Natural killer cell (primary cell): ENCODE measurements at regions of chr5 and their contacts with region 1.

Region 1: GRCh38 chr5:87121304-87122150 is 146.2 kb upstream of the RASA1 start:
- DNase-seq: peak; percentile 19 to 74
- ATAC-seq: peak; percentile 86 to 94 (median 86)
- H3K4me3 ChIP-seq: no peak overlapping the region
- H3K4me3 Mint-ChIP-seq: peak overlapping the region; percentile 54
- H3K27ac ChIP-seq: peak overlapping the region; percentile 63
- H3K27ac Mint-ChIP-seq: peak overlapping the region; percentile 67 to 75
- H3K4me1 ChIP-seq: peaks cover 18% of the 10 kb centered on the region
- H3K4me1 Mint-ChIP-seq: peaks cover 42 to 44% of the 10 kb centered on the region in 2 donors
- H3K27me3 ChIP-seq: no peaks in the 10 kb centered on the region
- H3K27me3 Mint-ChIP-seq: no peaks in the 10 kb centered on the region
- CTCF ChIP-seq: no peak

Region 2: GRCh38 chr5:86617756-86618576 is 503.6 kb before region 1 on chr5 and contains the start of gene COX7C:
- intact Hi-C with region 1: loop called (anchors 5 kb)
- DNase-seq: peak; percentile 81 to 99
- ATAC-seq: peak; percentile 97 to 98 (median 98)
- H3K4me3 ChIP-seq: peak within 1 kb of the TSS; percentile 89
- H3K4me3 Mint-ChIP-seq: peak within 1 kb of the TSS; percentile 98
- H3K27ac ChIP-seq: peak within 1 kb of the TSS; percentile 88
- H3K27ac Mint-ChIP-seq: peak within 1 kb of the TSS; percentile 93 to 98
- H3K4me1 ChIP-seq: peaks cover 5% of the 10 kb centered on the region
- H3K4me1 Mint-ChIP-seq: peaks cover 23 to 30% of the 10 kb centered on the region in 2 donors
- H3K27me3 ChIP-seq: peaks cover 3% of the 10 kb centered on the region
- H3K27me3 Mint-ChIP-seq: peaks cover 0 to 9% of the 10 kb centered on the region in 2 donors
- CTCF ChIP-seq: no peak
- total RNA-seq, gene COX7C: 237 to 264 (median 250) TPM

Region 3: GRCh38 chr5:87069974-87070624 is 51.4 kb before region 1 on chr5:
- intact Hi-C with region 1: loop called (anchors 2 kb)
- DNase-seq: peak in 1 of 2 donors; percentile 40
- ATAC-seq: peak in 2 of 3 donors; percentile 42 to 58
- H3K4me3 ChIP-seq: no peak overlapping the region
- H3K4me3 Mint-ChIP-seq: no peak overlapping the region
- H3K27ac ChIP-seq: no peak overlapping the region
- H3K27ac Mint-ChIP-seq: peak overlapping the region in 1 of 2 donors; percentile 56
- H3K4me1 ChIP-seq: peaks cover 21% of the 10 kb centered on the region
- H3K4me1 Mint-ChIP-seq: peaks cover 17 to 27% of the 10 kb centered on the region in 2 donors
- H3K27me3 ChIP-seq: no peaks in the 10 kb centered on the region
- H3K27me3 Mint-ChIP-seq: no peaks in the 10 kb centered on the region
- CTCF ChIP-seq: peak; percentile 41

Region 4: DNA sequence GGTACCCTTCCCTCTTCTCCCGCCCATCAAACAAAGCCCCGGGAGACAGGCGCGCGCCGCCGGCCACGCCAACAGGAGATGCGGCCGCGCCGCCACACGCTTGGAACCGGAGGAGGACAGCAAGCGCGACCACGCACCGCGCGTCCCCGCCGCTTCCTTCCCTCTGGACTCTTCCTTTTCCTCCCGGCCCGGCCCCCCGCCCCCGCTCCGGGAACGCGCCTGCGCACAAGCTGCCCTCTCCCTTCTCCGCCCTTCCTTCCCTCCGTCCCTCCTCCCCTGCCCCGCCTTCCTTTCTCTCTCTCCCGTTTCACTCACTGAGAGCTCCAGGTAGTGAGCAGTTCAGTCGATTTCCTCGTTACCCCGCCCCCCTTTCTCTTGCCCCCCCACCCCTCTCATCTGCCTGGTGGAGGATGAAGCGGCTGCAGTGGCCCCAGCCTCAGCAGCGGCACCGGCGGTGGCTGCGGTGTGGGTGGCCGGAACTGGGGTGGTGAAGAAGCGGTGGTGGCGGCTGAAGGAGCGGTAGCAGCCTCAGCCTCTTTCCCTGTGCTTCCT is 146.1 kb after region 1 on chr5 and contains the start of gene RASA1:
- intact Hi-C with region 1: loop called (anchors 2 kb)
- DNase-seq: peak in 1 of 2 donors; percentile 87
- ATAC-seq: peak; percentile 62 to 71 (median 65)
- H3K4me3 ChIP-seq: peak within 1 kb of the TSS; percentile 89
- H3K4me3 Mint-ChIP-seq: peak within 1 kb of the TSS; percentile 99
- H3K27ac ChIP-seq: peak within 1 kb of the TSS; percentile 72
- H3K27ac Mint-ChIP-seq: peak within 1 kb of the TSS; percentile 93 to 98
- H3K4me1 ChIP-seq: peaks cover 21% of the 10 kb centered on the region
- H3K4me1 Mint-ChIP-seq: peaks cover 23 to 30% of the 10 kb centered on the region in 2 donors
- H3K27me3 ChIP-seq: no peaks in the 10 kb centered on the region
- H3K27me3 Mint-ChIP-seq: no peaks in the 10 kb centered on the region
- CTCF ChIP-seq: no peak
- total RNA-seq, gene RASA1: 20.3 to 26.5 (median 21.2) TPM

Region 5: GRCh38 chr5:87412630-87413342 is 291.3 kb after region 1 on chr5 and contains the start of gene CCNH:
- intact Hi-C with region 1: loop called (anchors 5 kb)
- DNase-seq: peak; percentile 91 to 99
- ATAC-seq: peak; percentile 93 to 99 (median 96)
- H3K4me3 ChIP-seq: peak within 1 kb of the TSS; percentile 94
- H3K4me3 Mint-ChIP-seq: peak within 1 kb of the TSS; percentile 97
- H3K27ac ChIP-seq: peak within 1 kb of the TSS; percentile 97
- H3K27ac Mint-ChIP-seq: peak within 1 kb of the TSS; percentile 90 to 99
- H3K4me1 ChIP-seq: peaks cover 6% of the 10 kb centered on the region
- H3K4me1 Mint-ChIP-seq: peaks cover 40 to 44% of the 10 kb centered on the region in 2 donors
- H3K27me3 ChIP-seq: no peaks in the 10 kb centered on the region
- H3K27me3 Mint-ChIP-seq: peaks cover 10 to 25% of the 10 kb centered on the region in 2 donors
- CTCF ChIP-seq: no peak
- total RNA-seq, gene CCNH: 171 to 305 (median 268) TPM